ENCODE measurements at regions of chr6 and their contacts with region 1.

Region 1: GRCh38 chr6:109482905-109483735 is at the start of gene ZBTB24:
- DNase-seq: peak; percentile 91
- ATAC-seq: peak; percentile 85
- H3K4me3 Mint-ChIP-seq: peak within 1 kb of the TSS; percentile 96
- H3K27ac Mint-ChIP-seq: peak within 1 kb of the TSS; percentile 87
- H3K4me1 Mint-ChIP-seq: peaks cover 35% of the 10 kb centered on the region
- H3K27me3 Mint-ChIP-seq: no peaks in the 10 kb centered on the region
- CTCF ChIP-seq: no peak
- total RNA-seq, gene ZBTB24: 10.5 to 11.8 TPM

Region 2: DNA sequence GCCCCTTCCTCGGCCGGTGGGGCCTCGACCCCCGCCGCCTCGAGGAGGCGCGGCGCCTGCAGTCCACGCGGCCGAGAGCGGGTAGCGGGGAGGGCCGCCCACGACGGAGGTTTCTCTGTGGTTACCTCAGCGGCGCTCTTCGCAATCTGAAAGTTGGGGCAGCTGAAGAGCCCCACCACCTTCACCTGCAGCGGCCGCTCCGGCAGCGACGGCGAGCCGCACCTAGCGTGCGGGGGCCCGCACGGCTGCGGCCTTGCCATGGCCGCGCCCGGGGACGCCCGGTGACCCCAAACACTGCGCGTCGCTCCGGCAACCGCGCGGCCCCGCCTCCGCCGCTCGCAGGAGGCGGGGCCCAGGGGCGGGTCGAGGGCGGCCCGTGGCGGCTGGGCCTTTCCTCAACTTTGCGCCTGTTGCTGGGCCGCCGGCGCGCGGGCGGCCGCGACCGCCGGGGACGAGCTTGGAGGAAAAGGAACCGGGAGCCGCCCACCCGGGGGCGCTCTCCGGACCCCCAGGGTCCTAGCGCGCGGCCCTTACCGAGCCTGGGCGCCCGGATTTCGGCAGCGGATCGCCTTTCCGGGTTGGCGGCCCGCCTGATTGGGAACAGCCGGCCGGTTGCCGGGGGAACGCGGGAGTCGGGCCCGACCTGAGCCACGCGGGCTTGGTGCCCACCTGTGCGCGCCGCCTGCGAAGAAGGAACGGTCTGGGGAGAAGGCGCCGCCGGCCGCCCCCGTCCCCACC is 42.6 kb before region 1 on chr6 and contains the starts of genes PPIL6 and SMPD2:
- CTCF ChIA-PET with region 1: interaction called, 5 read pairs
- POLR2A ChIA-PET with region 1: interaction called, 6 read pairs
- intact Hi-C with region 1: loop called (anchors 5 kb)
- DNase-seq: peak; percentile 80
- ATAC-seq: peak; percentile 91
- H3K4me3 Mint-ChIP-seq: peak within 1 kb of the TSS; percentile 92
- H3K27ac Mint-ChIP-seq: peak within 1 kb of the TSS; percentile 89
- H3K4me1 Mint-ChIP-seq: peaks cover 26% of the 10 kb centered on the region
- H3K27me3 Mint-ChIP-seq: no peaks in the 10 kb centered on the region
- CTCF ChIP-seq: no peak
- total RNA-seq, gene PPIL6: 0.27 to 0.38 TPM
- total RNA-seq, gene SMPD2: 8.7 to 9.6 TPM

Region 3: DNA sequence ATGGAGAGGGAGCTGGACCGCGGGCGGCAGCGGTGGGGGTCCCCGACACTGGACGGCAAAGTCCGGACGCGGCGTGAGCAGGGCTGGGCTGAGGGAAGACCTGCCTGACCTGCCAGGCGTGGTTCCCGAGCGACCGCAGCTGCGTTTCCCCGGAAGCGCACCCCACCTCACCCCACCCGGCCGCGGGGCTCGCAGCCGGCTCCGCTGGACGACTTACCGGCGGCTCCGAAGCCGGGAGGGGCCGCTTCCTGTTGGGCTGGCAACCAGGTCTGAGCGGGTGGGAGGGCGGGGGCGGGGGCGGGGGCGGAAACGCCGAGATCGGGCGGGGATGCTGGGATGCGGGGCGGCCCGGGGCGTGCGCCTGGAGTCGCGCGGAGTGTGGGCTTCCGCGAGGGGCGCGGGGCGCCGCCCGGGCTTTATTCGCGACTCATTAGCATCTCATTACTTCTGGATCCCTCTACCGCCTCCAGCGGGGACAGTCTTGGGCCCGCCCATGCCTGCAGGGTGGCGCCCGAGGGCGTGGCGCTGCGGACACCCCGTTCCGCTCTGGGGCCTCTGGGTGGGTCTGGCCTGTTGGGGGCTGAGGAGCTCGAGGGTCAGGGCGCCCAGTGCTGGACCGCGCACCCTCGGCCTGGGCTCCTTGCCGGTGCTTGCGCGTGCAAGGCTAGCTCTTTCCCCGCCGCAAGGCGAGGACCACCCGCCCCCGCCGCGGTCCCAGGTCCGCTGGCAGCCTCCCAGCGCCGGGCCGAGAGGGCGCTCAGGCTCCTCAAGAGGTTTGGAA is 27.4 kb before region 1 on chr6 and contains the start of gene MICAL1:
- CTCF ChIA-PET with region 1: interaction called, 3 read pairs
- POLR2A ChIA-PET with region 1: interaction called, 13 read pairs
- intact Hi-C with region 1: no loop called
- DNase-seq: peak; percentile 79
- ATAC-seq: peak; percentile 54
- H3K4me3 Mint-ChIP-seq: peak within 1 kb of the TSS; percentile 90
- H3K27ac Mint-ChIP-seq: peak within 1 kb of the TSS; percentile 97
- H3K4me1 Mint-ChIP-seq: peaks cover 70% of the 10 kb centered on the region
- H3K27me3 Mint-ChIP-seq: no peaks in the 10 kb centered on the region
- CTCF ChIP-seq: peak; percentile 16
- total RNA-seq, gene MICAL1: 17.7 TPM

Region 4: DNA sequence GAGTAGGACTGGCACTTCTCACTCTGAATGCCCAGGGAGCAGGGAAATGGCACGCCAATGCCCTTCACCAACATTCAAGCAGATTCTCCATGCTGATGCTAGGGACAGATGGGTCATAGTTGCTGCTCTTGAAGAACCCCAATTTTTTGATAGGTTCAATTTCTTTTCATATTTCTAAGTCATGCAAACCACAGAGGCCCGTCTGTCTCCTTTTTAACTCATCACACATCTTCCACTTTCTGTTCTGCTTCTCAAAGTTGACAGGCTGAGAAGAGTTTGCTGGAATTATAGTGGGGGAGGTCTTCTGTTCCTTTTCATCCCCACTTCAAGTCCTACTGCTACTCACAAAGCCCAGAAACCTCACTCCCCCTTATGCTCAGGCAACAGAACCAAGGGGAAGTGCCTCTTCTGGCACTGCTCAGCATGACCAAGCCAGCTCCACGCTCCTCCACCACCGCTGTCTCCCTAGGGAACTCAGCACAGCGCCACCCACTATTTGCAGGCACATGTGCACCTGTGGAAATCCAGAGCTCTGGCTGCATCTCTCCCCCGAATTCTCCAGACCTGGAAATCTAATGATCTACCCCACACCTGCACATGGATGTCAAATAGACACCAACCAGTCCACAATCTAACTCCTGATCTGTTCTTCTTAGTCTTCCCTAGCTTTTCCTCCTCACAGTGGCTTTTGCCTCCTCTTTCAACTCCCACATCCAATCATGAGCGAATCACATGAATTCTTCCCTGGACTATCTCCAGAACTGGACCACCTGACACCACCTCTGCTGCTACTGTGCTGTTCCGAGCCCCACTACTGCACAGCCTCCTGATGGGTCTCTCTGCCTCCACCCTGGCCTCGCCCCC is 10.8 kb before region 1 on chr6:
- CTCF ChIA-PET with region 1: interaction called, 10 read pairs
- POLR2A ChIA-PET with region 1: interaction called, 6 read pairs
- intact Hi-C with region 1: no loop called
- DNase-seq: no peak
- ATAC-seq: peak; percentile 41
- H3K4me3 Mint-ChIP-seq: no peak overlapping the region
- H3K27ac Mint-ChIP-seq: peak overlapping the region; percentile 53
- H3K4me1 Mint-ChIP-seq: peaks cover 76% of the 10 kb centered on the region
- H3K27me3 Mint-ChIP-seq: no peaks in the 10 kb centered on the region
- CTCF ChIP-seq: no peak

Measured in activated CD8-positive, alpha-beta T cell treated with anti-CD3 and anti-CD28 coated beads for 36 hours (primary cell).